Common myeloid progenitor, CD34-positive (primary cell): ENCODE measurements at regions of chr17 and their contacts with region 1.

Region 1: DNA sequence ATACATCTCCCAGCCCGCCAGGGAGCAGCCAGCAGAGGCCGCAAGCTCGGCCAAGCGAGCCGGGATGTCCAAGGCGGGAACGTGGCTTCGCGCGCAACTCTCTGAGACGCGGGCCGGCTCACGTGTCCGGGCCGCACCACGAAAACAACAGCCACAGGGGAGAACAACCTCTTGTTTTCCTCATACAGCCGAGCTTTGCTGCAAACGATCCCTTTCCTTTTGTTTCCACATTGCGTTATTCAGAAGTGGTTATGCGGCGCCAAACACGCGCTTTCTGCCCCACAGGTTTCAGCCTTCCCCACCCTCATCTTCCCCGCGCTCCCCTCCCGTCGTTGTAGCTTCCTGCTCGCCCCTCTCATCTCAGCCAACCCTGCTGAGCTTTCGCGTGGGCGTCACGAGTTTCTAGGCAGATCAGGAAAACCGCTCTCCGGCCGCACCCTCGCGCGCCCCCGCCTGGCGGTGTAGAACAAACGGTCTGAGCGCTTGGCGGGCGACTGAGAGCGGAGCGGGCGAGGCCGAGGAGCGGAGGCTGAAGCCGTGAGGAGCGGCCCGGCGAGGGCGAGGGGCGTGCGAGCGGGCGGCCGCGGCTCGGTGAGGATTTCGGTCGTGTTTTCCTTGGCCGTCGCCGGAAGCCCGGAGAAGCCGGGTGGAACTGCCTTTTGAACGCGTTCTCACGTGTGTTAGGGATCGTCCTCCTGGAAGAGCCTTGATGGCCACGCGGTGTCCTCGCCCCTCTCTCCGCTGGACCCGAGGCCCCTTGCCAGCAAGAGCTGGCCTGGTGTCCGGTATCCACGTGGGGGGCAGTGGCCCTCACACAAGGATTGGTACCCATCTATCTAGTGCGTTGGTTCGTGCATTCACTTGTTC is 6.6 kb upstream of the SMARCD2 start:
- DNase-seq: peak; percentile 96 to 97 (median 97)
- H3K4me3 ChIP-seq: peak overlapping the region in 5 of 7 experiments; percentile 39 to 70 (median 54)
- H3K27ac ChIP-seq: peak overlapping the region; percentile 83 to 93
- H3K4me1 ChIP-seq: peaks cover 3 to 9% (median 6%) of the 10 kb centered on the region in 4 experiments
- H3K27me3 ChIP-seq: no peaks in the 10 kb centered on the region

Region 2: GRCh38 chr17:63859257-63859656 is 10.2 kb after region 1 on chr17:
- CTCF ChIA-PET with region 1: interaction called, 36 read pairs
- POLR2A ChIA-PET with region 1: no interaction called
- DNase-seq: no peak
- H3K4me3 ChIP-seq: no peak overlapping the region
- H3K27ac ChIP-seq: no peak overlapping the region
- H3K4me1 ChIP-seq: no peaks in the 10 kb centered on the region
- H3K27me3 ChIP-seq: no peaks in the 10 kb centered on the region